ENCODE measurements at regions of chr7 and their contacts with region 1.

Region 1: DNA sequence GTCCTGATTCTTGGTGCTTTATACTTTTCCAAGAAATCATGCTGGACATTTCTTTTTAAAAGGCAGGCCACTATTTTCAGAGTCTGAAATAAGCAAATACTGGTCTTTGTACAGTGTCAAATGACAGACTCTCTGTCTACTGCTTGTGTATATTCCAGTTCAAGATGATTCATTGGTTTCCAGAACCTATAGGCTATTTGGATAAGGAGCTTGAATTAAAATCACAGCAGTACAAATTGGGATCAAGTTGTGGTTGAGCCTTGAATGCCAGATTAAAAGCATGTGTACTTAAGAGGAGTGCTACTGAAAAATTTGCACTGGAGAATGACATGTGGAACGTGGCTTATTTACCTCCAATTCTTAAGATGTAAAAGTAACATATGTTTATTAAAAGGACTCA is 10.7 kb downstream of the KMT2E start:
- DNase-seq: no peak
- ATAC-seq: no peak
- H3K4me3 ChIP-seq: no peak overlapping the region
- H3K4me3 Mint-ChIP-seq: peak overlapping the region; percentile 68
- H3K27ac ChIP-seq: no peak overlapping the region
- H3K27ac Mint-ChIP-seq: no peak overlapping the region
- H3K4me1 ChIP-seq: peaks cover 38% of the 10 kb centered on the region
- H3K4me1 Mint-ChIP-seq: peaks cover 95% of the 10 kb centered on the region
- H3K27me3 ChIP-seq: no peaks in the 10 kb centered on the region
- H3K27me3 Mint-ChIP-seq: no peaks in the 10 kb centered on the region
- CTCF ChIP-seq: no peak

Region 2: DNA sequence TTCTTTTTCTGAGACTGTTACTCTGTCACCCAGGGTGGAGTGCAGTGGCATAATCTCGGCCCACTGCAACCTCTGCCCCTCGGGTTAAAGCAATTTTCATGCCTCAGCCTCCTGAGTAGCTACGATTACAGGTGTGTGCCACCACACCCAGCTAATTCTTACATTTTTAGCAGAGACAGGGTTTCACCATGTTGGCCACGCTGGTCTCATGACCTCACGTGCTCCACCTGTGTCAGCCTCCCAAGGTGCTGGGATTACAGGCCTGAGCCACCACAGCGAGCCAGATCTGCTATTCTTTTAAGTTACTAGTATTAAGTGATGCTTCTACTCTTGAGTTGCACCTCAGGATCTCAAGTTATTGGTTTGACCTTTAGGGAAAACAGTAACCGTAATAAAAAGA is 33.8 kb before region 1 on chr7:
- CTCF ChIA-PET with region 1: no interaction called
- POLR2A ChIA-PET with region 1: no interaction called
- intact Hi-C with region 1: no loop called
- DNase-seq: no peak
- ATAC-seq: no peak
- H3K4me3 ChIP-seq: no peak overlapping the region
- H3K4me3 Mint-ChIP-seq: no peak overlapping the region
- H3K27ac ChIP-seq: peak overlapping the region in 1 of 2 donors; percentile 32
- H3K27ac Mint-ChIP-seq: no peak overlapping the region
- H3K4me1 ChIP-seq: peaks cover 24% of the 10 kb centered on the region
- H3K4me1 Mint-ChIP-seq: peaks cover 53% of the 10 kb centered on the region
- H3K27me3 ChIP-seq: no peaks in the 10 kb centered on the region
- H3K27me3 Mint-ChIP-seq: no peaks in the 10 kb centered on the region
- CTCF ChIP-seq: no peak

Region 3: GRCh38 chr7:105084581-105084980 is 59.8 kb after region 1 on chr7:
- CTCF ChIA-PET with region 1: no interaction called
- POLR2A ChIA-PET with region 1: no interaction called
- intact Hi-C with region 1: no loop called
- DNase-seq: no peak
- ATAC-seq: no peak
- H3K4me3 ChIP-seq: no peak overlapping the region
- H3K4me3 Mint-ChIP-seq: no peak overlapping the region
- H3K27ac ChIP-seq: no peak overlapping the region
- H3K27ac Mint-ChIP-seq: no peak overlapping the region
- H3K4me1 ChIP-seq: no peaks in the 10 kb centered on the region
- H3K4me1 Mint-ChIP-seq: peaks cover 28% of the 10 kb centered on the region
- H3K27me3 ChIP-seq: no peaks in the 10 kb centered on the region
- H3K27me3 Mint-ChIP-seq: no peaks in the 10 kb centered on the region
- CTCF ChIP-seq: no peak

Region 4: GRCh38 chr7:105330526-105330925 is 305.8 kb after region 1 on chr7:
- CTCF ChIA-PET with region 1: no interaction called
- POLR2A ChIA-PET with region 1: no interaction called
- intact Hi-C with region 1: loop called in 1 of 2 experiments (anchors 5 kb)
- DNase-seq: no peak
- ATAC-seq: no peak
- H3K4me3 ChIP-seq: no peak overlapping the region
- H3K4me3 Mint-ChIP-seq: no peak overlapping the region
- H3K27ac ChIP-seq: no peak overlapping the region
- H3K27ac Mint-ChIP-seq: no peak overlapping the region
- H3K4me1 ChIP-seq: peaks cover 2% of the 10 kb centered on the region
- H3K4me1 Mint-ChIP-seq: peaks cover 39% of the 10 kb centered on the region
- H3K27me3 ChIP-seq: no peaks in the 10 kb centered on the region
- H3K27me3 Mint-ChIP-seq: no peaks in the 10 kb centered on the region
- CTCF ChIP-seq: no peak

Region 5: GRCh38 chr7:105376908-105377533 is 352.3 kb after region 1 on chr7:
- CTCF ChIA-PET with region 1: no interaction called
- POLR2A ChIA-PET with region 1: no interaction called
- intact Hi-C with region 1: no loop called
- DNase-seq: no peak
- ATAC-seq: no peak
- H3K4me3 ChIP-seq: no peak overlapping the region
- H3K4me3 Mint-ChIP-seq: no peak overlapping the region
- H3K27ac ChIP-seq: no peak overlapping the region
- H3K27ac Mint-ChIP-seq: peak overlapping the region; percentile 2
- H3K4me1 ChIP-seq: peaks cover 24% of the 10 kb centered on the region
- H3K4me1 Mint-ChIP-seq: peaks cover 64% of the 10 kb centered on the region
- H3K27me3 ChIP-seq: no peaks in the 10 kb centered on the region
- H3K27me3 Mint-ChIP-seq: no peaks in the 10 kb centered on the region
- CTCF ChIP-seq: no peak

Measured in CD4-positive, alpha-beta T cell (primary cell).